ENCODE measurements at regions of chr3 and their contacts with region 1.

Region 1: GRCh38 chr3:170180908-170181879 is at the start of gene PHC3:
- DNase-seq: peak; percentile 92
- H3K4me3 Mint-ChIP-seq: peak within 1 kb of the TSS; percentile 99
- H3K27ac Mint-ChIP-seq: peak within 1 kb of the TSS; percentile 98
- H3K4me1 Mint-ChIP-seq: peaks cover 27% of the 10 kb centered on the region
- H3K27me3 Mint-ChIP-seq: no peaks in the 10 kb centered on the region
- total RNA-seq, gene PHC3: 74.5 TPM

Region 2: DNA sequence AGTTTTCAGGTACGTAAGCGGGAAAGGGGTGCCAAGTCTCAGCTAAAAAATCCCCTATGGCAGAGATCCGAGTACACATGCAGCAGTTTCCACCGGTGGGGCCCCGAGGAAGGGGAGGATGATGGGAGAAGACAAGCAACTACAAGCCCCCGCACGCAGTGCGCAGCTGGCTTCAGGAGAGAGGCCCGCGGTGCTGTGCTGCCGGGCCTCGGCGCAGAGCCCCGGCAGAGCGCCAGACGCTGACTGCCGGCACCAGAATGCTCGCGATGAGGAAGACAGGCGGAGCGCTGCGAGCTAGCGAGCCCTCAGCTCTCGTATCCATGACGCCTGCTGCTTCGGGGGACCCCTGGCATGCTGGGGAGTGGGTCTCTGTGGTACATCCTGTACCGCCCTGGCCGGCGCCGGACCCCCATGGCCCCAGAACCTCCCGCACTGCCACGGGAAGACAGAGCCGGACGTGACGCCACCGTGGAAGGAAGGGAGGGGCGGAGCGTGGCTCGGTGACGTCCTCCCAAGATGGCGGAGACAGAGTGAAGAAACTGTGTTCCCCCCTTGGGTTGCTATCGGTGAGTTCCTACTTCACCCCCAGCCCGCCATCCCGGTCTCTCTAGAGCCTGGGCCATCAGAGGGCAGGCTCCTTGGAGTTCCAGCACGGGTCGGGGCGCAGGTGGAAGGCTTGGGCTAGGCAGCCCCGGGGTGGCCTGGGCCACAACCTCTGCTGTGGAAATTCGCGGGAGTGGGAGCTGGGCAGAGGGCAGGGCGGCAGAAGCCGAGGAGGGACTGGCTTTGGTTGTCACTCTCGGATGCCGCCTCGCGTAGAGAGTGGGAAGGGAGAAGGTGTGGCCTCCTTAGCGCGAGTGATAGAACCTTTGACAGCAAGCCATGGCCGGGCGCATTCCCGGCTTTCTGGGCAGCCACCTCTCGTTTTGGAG is 408.0 kb before region 1 on chr3 and contains the start of gene MYNN:
- CTCF ChIA-PET with region 1: interaction called, 4 read pairs
- POLR2A ChIA-PET with region 1: interaction called, 19 read pairs
- DNase-seq: peak; percentile 93
- H3K4me3 Mint-ChIP-seq: peak within 1 kb of the TSS; percentile 93
- H3K27ac Mint-ChIP-seq: peak within 1 kb of the TSS; percentile 100
- H3K4me1 Mint-ChIP-seq: peaks cover 43% of the 10 kb centered on the region
- H3K27me3 Mint-ChIP-seq: no peaks in the 10 kb centered on the region
- total RNA-seq, gene MYNN: 14.9 to 15.6 TPM

Region 3: DNA sequence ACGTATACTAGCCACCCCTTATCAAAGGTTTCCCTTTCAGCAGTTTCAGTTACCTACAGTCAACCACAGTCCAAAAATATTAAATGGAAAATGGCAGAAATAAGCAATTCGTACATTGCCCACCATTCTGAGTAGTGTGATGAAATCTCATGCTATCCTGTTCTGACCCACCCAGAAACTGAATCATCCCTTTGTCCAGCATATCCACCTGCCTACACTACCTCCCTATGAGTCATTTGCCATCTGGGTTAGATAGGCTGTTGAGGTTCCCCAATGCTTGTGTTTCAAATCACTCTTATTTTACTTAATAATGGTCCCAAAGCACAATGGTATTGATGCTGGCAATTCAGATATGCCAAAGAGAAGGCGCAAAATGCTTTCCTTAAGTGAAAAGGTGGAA is 15.6 kb after region 1 on chr3:
- CTCF ChIA-PET with region 1: no interaction called
- POLR2A ChIA-PET with region 1: no interaction called
- DNase-seq: no peak
- H3K4me3 Mint-ChIP-seq: no peak overlapping the region
- H3K27ac Mint-ChIP-seq: no peak overlapping the region
- H3K4me1 Mint-ChIP-seq: no peaks in the 10 kb centered on the region
- H3K27me3 Mint-ChIP-seq: peaks cover 22% of the 10 kb centered on the region

Region 4: DNA sequence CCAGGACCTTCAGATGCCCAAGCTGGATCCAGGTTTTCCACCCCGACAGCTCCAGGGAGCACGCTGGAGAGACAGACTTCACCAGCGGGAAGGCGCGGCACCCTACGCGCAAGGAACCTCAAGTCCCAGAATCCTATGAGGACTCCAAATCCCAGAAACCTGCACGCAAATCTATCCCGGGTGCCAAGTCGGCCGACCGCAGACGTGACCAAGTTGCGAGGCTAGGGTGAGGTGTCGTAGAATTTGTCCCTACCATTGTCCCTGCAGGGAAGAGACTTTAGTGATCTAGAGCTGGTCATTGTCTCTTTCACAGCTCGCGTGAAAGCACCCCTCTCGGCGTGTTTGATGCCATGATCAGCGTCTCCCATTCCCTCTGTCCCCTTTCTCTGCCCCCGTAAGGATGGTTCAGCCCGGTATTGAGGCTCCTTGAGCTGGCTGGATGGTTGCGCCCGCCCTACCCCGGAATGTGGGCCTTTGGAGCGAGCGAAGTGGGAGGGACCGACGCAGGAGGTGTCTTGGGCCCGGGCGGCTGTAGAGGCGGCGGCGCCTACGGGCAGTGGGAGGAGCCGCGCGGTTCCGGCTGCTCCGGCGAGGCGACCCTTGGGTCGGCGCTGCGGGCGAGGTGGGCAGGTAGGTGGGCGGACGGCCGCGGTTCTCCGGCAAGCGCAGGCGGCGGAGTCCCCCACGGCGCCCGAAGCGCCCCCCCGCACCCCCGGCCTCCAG is 40.9 kb after region 1 on chr3 and contains the start of gene PRKCI:
- CTCF ChIA-PET with region 1: no interaction called
- POLR2A ChIA-PET with region 1: interaction called, 16 read pairs
- DNase-seq: peak; percentile 92
- H3K4me3 Mint-ChIP-seq: peak within 1 kb of the TSS; percentile 80
- H3K27ac Mint-ChIP-seq: peak within 1 kb of the TSS; percentile 69
- H3K4me1 Mint-ChIP-seq: peaks cover 28% of the 10 kb centered on the region
- H3K27me3 Mint-ChIP-seq: no peaks in the 10 kb centered on the region
- total RNA-seq, gene PRKCI: 18.6 to 25.7 TPM

Region 5: GRCh38 chr3:170277833-170278580 is 96.8 kb after region 1 on chr3:
- CTCF ChIA-PET with region 1: no interaction called
- POLR2A ChIA-PET with region 1: no interaction called
- DNase-seq: no peak
- H3K4me3 Mint-ChIP-seq: peak overlapping the region; percentile 77
- H3K27ac Mint-ChIP-seq: peak overlapping the region; percentile 82
- H3K4me1 Mint-ChIP-seq: peaks cover 30% of the 10 kb centered on the region
- H3K27me3 Mint-ChIP-seq: no peaks in the 10 kb centered on the region

Region 6: DNA sequence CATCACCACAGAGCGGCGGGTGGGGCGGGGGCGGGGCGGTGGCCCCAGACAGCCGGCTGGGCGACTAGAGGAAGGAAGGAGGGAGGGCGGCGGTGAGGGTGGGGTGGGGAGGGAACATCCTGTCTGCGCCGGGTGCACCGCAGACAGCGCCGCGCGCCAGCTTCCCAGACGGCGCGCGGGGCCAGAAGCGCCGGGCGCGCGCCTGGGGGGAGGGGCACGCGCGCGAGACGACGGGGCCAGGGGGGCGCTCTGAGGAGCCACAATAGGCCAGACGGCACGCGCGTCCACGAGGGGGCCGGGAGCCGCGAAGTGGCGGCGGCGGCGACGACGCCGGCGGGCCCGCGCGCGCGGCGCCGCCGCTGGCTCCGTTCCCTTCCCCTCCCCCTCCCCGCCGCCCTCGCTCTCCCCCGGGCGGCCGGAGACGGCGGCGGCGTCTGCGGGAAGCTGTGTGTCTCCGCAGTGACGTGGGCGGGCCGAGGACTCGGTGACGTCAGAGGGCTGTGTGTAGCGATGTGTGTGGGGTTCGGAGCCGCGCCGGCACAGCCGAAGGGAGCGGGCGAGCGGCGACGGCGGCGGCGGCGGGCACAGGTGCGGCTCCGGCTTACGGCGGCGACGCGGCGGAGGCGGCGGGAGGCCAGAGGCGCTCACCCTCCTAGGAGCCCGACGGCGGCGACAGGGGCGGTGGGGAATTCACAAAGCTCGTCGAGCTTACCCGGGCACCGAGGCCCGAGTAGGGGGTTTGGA is 176.2 kb after region 1 on chr3 and contains the start of gene SKIL:
- CTCF ChIA-PET with region 1: interaction called, 5 read pairs
- POLR2A ChIA-PET with region 1: interaction called, 42 read pairs
- DNase-seq: peak; percentile 95
- H3K4me3 Mint-ChIP-seq: peak within 1 kb of the TSS; percentile 84
- H3K27ac Mint-ChIP-seq: peak within 1 kb of the TSS; percentile 95
- H3K4me1 Mint-ChIP-seq: peaks cover 41% of the 10 kb centered on the region
- H3K27me3 Mint-ChIP-seq: peaks cover 5% of the 10 kb centered on the region
- total RNA-seq, gene SKIL: 18.0 to 19.0 TPM